Right ventricle myocardium inferior (tissue), 1 donor: ENCODE measurements at regions of chr19 and their contacts with region 1.

Region 1: GRCh38 chr19:12365236-12366162 is at the start of gene ZNF442:
- DNase-seq: peak; percentile 95
- ATAC-seq: peak; percentile 99
- total RNA-seq, gene ZNF442: 2.4 TPM

Region 2: GRCh38 chr19:12333162-12334159 is 32.0 kb before region 1 on chr19 and contains the start of gene ZNF563:
- intact Hi-C with region 1: loop called (anchors 2 kb)
- DNase-seq: peak; percentile 97
- ATAC-seq: peak; percentile 99
- total RNA-seq, gene ZNF563: 5.3 TPM